Caco-2 (cell line): ENCODE measurements at regions of chr11 and their contacts with region 1.

Region 1: DNA sequence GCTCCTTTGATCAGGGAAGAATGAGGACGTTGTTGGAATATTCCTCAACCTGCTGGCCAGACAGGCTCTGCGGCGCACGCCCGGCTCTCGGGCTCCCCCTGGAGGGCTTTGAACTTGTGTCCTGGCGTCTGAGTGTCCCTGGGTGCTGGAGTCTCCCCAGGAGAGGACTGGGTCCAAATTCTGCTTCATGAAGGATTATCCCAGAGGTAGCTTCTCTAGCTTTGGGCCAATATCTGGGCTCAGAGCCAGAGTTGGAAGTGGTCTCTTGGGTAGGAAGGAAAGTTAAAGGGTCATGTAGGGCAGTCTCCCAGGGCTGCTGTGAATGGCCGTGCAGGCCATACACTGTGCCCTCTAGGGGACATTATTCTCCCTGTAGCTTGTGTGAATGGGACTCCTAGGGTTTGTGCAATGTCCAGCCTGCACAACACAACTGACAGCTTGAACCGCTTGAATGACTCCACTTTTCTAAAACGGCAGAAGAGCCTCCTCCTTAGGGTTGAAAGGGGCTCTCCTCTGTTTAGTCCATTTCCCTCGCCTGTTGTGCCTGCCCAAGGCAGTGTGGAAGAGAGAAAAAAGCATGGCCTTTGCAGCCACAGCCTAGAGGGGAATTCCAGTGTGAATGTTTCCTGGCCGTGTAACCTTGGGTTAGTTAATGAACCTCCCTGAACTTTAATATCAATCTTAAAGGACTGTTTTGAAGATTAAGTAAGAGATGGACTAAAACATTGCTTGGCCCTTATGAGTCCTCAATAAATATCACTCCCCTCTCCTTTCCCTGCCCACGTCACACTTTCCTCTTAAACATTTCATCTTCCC is 111.2 kb upstream of the THY1 start:
- DNase-seq: peak; percentile 86 to 94
- H3K4me3 ChIP-seq: no peak overlapping the region
- H3K4me3 Mint-ChIP-seq: no peak overlapping the region
- H3K27ac Mint-ChIP-seq: no peak overlapping the region
- H3K4me1 ChIP-seq: peaks cover 14% of the 10 kb centered on the region
- H3K4me1 Mint-ChIP-seq: peaks cover 14% of the 10 kb centered on the region
- H3K27me3 ChIP-seq: no peaks in the 10 kb centered on the region
- H3K27me3 Mint-ChIP-seq: peaks cover 3% of the 10 kb centered on the region
- CTCF ChIP-seq: peak; percentile 99 to 100

Region 2: GRCh38 chr11:119320624-119321524 is 213.3 kb before region 1 on chr11:
- CTCF ChIA-PET with region 1: no interaction called
- POLR2A ChIA-PET with region 1: no interaction called
- intact Hi-C with region 1: no loop called
- DNase-seq: peak; percentile 42 to 50
- H3K4me3 ChIP-seq: peak overlapping the region; percentile 39
- H3K4me3 Mint-ChIP-seq: peak overlapping the region; percentile 74
- H3K27ac Mint-ChIP-seq: peak overlapping the region; percentile 25
- H3K4me1 ChIP-seq: peaks cover 27% of the 10 kb centered on the region
- H3K4me1 Mint-ChIP-seq: no peaks in the 10 kb centered on the region
- H3K27me3 ChIP-seq: no peaks in the 10 kb centered on the region; the same call in 1 of the 2 replicates
- H3K27me3 Mint-ChIP-seq: no peaks in the 10 kb centered on the region
- CTCF ChIP-seq: peak in 1 of 2 experiments; percentile 15

Region 3: DNA sequence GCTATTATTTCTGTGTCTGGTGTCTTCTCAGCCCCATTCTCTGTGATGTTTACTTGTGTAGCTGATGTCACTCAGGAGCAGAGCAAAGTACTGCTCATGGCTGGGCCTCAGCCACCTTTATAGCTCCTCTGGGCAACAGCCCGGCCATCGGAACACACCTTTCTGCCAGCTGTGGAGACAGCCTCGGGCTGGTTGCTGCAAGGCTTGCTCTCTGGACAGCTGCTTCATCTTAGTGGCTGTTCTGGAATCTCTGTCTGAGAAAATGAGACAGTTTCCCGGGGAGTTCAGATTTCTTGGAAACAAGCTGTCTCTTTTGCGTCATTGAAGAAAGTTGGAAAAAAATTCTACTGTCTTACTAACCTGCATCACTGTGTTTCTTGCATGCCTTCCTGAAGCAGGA is 131.1 kb before region 1 on chr11:
- CTCF ChIA-PET with region 1: no interaction called
- POLR2A ChIA-PET with region 1: no interaction called
- intact Hi-C with region 1: no loop called
- DNase-seq: no peak
- H3K4me3 ChIP-seq: no peak overlapping the region
- H3K4me3 Mint-ChIP-seq: no peak overlapping the region
- H3K27ac Mint-ChIP-seq: no peak overlapping the region
- H3K4me1 ChIP-seq: no peaks in the 10 kb centered on the region
- H3K4me1 Mint-ChIP-seq: no peaks in the 10 kb centered on the region
- H3K27me3 ChIP-seq: no peaks in the 10 kb centered on the region
- H3K27me3 Mint-ChIP-seq: no peaks in the 10 kb centered on the region
- CTCF ChIP-seq: no peak

Region 4: GRCh38 chr11:119481021-119481666 is 53.0 kb before region 1 on chr11:
- CTCF ChIA-PET with region 1: interaction called, 5 read pairs
- POLR2A ChIA-PET with region 1: no interaction called
- intact Hi-C with region 1: loop called (anchors 1 kb)
- DNase-seq: peak; percentile 93 to 99
- H3K4me3 ChIP-seq: no peak overlapping the region
- H3K4me3 Mint-ChIP-seq: no peak overlapping the region
- H3K27ac Mint-ChIP-seq: peak overlapping the region; percentile 16
- H3K4me1 ChIP-seq: peaks cover 5% of the 10 kb centered on the region; the same call in 1 of the 2 replicates
- H3K4me1 Mint-ChIP-seq: peaks cover 8% of the 10 kb centered on the region
- H3K27me3 ChIP-seq: no peaks in the 10 kb centered on the region; the same call in 1 of the 2 replicates
- H3K27me3 Mint-ChIP-seq: peaks cover 13% of the 10 kb centered on the region
- CTCF ChIP-seq: peak; percentile 99 to 100

Region 5: DNA sequence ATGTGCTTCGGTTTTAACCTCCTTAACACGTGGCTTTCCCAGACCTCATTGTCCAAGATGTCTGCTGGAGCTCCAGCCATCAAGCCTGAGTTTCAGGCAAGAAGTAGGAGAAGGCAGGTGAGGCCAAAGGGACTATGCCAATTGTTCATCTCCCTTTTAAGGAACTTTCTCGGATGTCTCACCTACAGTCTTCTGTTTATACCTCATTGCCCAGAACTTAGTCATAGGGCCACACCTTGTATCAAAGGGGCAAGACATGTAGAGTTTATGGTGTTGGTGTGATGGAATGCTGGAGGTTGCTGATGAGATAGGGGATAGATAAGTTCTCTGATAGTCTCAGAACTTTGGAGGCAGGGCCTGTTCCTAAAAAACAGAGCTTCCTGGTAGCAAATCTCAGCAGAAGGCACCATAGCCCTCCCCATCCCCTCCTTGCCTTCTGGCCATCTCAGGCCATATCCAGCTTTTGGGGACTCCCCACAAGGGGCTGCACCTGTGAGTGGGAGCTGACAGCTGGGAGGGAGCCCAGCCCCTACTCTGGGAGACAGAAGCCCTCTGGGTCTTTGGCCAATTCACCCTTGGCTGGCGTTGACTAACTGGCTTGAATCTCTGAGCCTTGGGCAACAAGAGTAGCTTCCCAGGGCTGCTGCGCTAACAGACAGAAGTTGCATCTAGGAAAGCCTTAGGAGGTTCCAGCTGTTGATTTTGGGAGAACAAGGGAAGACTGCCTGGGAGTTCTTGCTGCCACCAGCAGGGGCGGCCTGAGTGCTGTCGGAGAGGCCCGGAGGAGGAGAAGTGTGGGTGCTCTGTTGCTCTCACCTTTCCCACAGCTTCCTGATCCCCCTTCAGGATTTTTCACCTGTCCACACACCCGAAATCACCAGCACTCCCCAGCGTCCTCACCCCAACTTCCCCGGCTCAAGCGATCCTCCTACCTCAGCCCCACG is 38.6 kb after region 1 on chr11:
- CTCF ChIA-PET with region 1: no interaction called
- POLR2A ChIA-PET with region 1: no interaction called
- intact Hi-C with region 1: no loop called
- DNase-seq: no peak
- H3K4me3 ChIP-seq: no peak overlapping the region
- H3K4me3 Mint-ChIP-seq: no peak overlapping the region
- H3K27ac Mint-ChIP-seq: no peak overlapping the region
- H3K4me1 ChIP-seq: peaks cover 10% of the 10 kb centered on the region
- H3K4me1 Mint-ChIP-seq: peaks cover 4% of the 10 kb centered on the region
- H3K27me3 ChIP-seq: no peaks in the 10 kb centered on the region
- H3K27me3 Mint-ChIP-seq: peaks cover 3% of the 10 kb centered on the region
- CTCF ChIP-seq: peak in 1 of 2 experiments; percentile 30